Naive thymus-derived CD4-positive, alpha-beta T cell (primary cell): ENCODE measurements at regions of chr17 and their contacts with region 1.

Region 1: DNA sequence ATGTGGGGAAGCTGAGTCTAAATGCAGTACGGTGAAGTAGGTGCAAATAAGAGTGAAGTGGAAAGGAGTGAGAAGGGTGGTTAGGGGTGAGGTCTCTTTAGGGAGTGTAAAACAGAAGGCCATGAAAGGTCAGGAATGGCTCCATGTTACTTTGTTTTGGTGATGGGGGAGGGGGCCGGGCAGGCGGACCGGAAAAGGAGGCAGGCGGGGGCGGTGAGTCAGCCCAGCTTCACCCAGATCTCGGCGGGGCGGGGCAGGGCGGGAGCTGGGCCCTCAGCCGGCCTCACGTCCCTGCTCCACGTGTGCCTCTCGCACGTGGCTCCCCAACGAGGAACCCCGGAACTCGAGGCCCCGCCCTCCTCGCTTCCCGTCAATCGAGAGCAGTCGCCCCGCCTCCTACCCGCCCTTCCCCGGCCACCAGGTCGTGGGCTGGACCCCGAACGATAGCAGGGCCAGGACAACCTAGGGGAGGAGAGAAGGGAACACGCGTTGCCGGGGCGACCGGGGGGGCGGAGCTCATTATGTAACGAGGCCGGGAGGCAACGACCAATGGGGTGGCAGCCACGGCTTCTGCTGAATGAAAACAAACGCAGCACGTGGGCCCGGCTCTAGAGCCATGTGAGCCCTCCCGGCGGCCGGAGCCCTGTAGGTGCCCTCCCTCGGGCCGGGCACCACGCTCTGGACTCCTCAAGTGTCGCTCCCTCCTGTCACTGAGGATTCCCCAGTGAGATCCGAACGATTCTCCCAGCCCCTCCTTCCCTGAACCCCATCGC is 1.4 kb downstream of the NR1D1 start:
- DNase-seq: peak; percentile 94 to 99 (median 97)
- ATAC-seq: peak; percentile 78
- H3K4me3 ChIP-seq: peak overlapping the region; percentile 97
- H3K4me3 Mint-ChIP-seq: peak overlapping the region; percentile 82 to 99 (median 97)
- H3K27ac ChIP-seq: peak overlapping the region; percentile 94
- H3K27ac Mint-ChIP-seq: peak overlapping the region; percentile 75 to 100 (median 95)
- H3K4me1 ChIP-seq: peaks cover 62 to 69% of the 10 kb centered on the region in 2 donors
- H3K4me1 Mint-ChIP-seq: peaks cover 68 to 96% (median 84%) of the 10 kb centered on the region in 7 donors
- H3K27me3 ChIP-seq: no peaks in the 10 kb centered on the region
- H3K27me3 Mint-ChIP-seq: peaks cover 0 to 6% (median 0%) of the 10 kb centered on the region in 5 donors

Region 2: GRCh38 chr17:39927101-39927928 is 171.7 kb before region 1 on chr17 and contains the starts of genes LRRC3C and ORMDL3:
- CTCF ChIA-PET with region 1: no interaction called
- POLR2A ChIA-PET with region 1: no interaction called
- intact Hi-C with region 1: loop called in 1 of 2 experiments (anchors 1 kb)
- DNase-seq: peak; percentile 86 to 95 (median 92)
- ATAC-seq: peak; percentile 92
- H3K4me3 ChIP-seq: peak within 1 kb of the TSS; percentile 82
- H3K4me3 Mint-ChIP-seq: peak within 1 kb of the TSS; percentile 90 to 98 (median 92)
- H3K27ac ChIP-seq: peak within 1 kb of the TSS; percentile 87
- H3K27ac Mint-ChIP-seq: peak within 1 kb of the TSS; percentile 85 to 97 (median 93)
- H3K4me1 ChIP-seq: peaks cover 49 to 50% of the 10 kb centered on the region in 2 donors
- H3K4me1 Mint-ChIP-seq: peaks cover 20 to 59% (median 46%) of the 10 kb centered on the region in 7 donors
- H3K27me3 ChIP-seq: no peaks in the 10 kb centered on the region
- H3K27me3 Mint-ChIP-seq: no peaks in the 10 kb centered on the region
- total RNA-seq, gene LRRC3C: 0.27 TPM in 1 of 5 experiments, not detected in the others
- total RNA-seq, gene ORMDL3: 77.6 to 205 (median 110) TPM

Region 3: DNA sequence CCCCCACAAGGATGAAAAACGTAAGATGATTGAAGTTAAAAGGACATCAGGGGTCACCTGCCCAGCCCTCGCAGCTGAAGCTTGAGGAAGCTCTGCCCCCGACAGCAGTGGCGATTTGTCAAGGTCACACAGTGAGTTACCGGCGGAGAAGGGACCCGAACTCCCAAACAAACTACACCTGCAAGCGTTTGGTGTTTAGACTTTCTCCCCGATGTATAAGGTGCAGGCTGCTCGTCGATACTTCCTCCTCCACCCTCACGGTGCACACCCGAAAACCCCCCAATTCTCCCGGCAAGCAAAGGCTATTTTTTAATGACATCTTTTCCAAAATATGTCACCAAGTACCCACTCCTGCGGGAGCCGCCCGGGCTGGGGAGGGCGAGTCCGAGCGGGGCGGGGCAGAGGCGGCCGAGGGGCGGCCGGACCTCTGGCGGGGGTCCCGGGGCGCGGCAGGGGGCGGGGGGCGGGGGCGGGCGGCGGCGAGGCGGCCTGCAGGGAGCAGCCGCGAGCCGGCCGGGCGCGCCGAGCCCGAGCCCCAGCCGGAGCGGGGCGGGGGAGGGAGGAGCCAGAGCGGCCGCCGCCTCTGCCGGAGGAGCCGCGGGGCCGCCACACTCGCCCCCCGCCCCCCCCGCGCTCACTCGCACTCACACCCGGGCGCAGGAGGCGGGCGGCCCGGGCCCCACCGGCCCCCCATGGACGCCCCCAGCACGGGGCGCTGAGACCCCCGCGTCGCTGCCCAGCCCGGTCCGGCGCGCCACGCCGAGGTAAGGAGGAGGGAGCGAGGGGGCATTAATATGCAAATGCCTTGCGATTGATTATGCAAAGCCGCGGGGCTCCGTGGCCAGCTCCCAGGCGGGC is 36.5 kb before region 1 on chr17 and contains the start of gene THRA:
- CTCF ChIA-PET with region 1: interaction called, 4 read pairs
- POLR2A ChIA-PET with region 1: interaction called, 62 read pairs
- intact Hi-C with region 1: loop called in 1 of 2 experiments (anchors 1 kb)
- DNase-seq: peak; percentile 56 to 77 (median 71)
- ATAC-seq: peak; percentile 93
- H3K4me3 ChIP-seq: peak within 1 kb of the TSS; percentile 81
- H3K4me3 Mint-ChIP-seq: peak within 1 kb of the TSS; percentile 86 to 97 (median 94)
- H3K27ac ChIP-seq: peak within 1 kb of the TSS; percentile 84
- H3K27ac Mint-ChIP-seq: peak within 1 kb of the TSS; percentile 35 to 95 (median 89)
- H3K4me1 ChIP-seq: peaks cover 21 to 34% of the 10 kb centered on the region in 2 donors
- H3K4me1 Mint-ChIP-seq: peaks cover 32 to 50% (median 43%) of the 10 kb centered on the region in 7 donors
- H3K27me3 ChIP-seq: no peaks in the 10 kb centered on the region
- H3K27me3 Mint-ChIP-seq: peaks cover 0 to 62% (median 0%) of the 10 kb centered on the region in 5 donors
- total RNA-seq, gene THRA: 3.2 to 55.9 (median 48.4) TPM

Region 4: DNA sequence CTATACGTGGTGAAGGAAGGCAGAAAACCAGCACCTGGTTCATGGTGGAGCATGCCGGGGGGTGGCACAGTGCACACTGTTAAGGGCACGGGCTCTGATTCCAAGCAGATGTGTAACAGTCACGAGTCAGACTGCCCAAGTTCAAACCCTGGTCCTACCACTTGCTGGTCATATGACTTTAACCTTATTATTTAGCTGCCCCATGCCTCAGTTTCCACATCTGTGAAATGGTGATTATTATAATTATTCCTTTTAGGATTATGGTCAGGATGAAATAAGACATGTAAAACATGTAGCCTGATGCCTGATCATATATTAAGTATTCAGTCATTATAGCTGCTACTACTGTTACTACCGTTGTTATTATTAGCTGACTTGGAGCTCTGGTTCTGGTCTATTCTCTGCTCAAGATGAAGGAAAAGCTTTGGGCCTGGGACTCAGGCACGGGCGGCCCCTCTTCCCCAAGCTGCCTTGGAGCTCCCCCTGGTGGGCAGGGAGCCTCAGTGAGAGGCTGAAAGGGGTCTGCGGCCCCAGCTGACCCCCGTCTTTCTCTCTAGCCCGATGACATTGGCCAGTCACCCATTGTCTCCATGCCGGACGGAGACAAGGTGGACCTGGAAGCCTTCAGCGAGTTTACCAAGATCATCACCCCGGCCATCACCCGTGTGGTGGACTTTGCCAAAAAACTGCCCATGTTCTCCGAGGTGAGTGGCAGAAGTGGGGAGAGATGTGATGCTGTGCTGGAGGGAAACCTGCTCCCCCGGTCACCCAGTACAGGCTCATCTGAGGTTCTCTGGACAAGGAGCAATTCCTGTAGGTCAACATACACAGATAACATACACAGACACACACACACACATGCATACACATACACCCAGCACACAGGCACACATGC is 12.6 kb before region 1 on chr17:
- CTCF ChIA-PET with region 1: interaction called, 29 read pairs
- POLR2A ChIA-PET with region 1: interaction called, 7 read pairs
- intact Hi-C with region 1: no loop called
- DNase-seq: peak in 6 of 9 donors; percentile 56 to 69 (median 61)
- ATAC-seq: peak; percentile 76
- H3K4me3 ChIP-seq: no peak overlapping the region
- H3K4me3 Mint-ChIP-seq: peak overlapping the region in 1 of 10 donors; percentile 38
- H3K27ac ChIP-seq: no peak overlapping the region
- H3K27ac Mint-ChIP-seq: peak overlapping the region in 8 of 9 donors; percentile 9 to 70 (median 47)
- H3K4me1 ChIP-seq: peaks cover 0 to 4% of the 10 kb centered on the region in 2 donors
- H3K4me1 Mint-ChIP-seq: peaks cover 4 to 35% (median 21%) of the 10 kb centered on the region in 7 donors
- H3K27me3 ChIP-seq: no peaks in the 10 kb centered on the region
- H3K27me3 Mint-ChIP-seq: no peaks in the 10 kb centered on the region

Region 5: GRCh38 chr17:40139566-40140058 is 40.6 kb after region 1 on chr17:
- CTCF ChIA-PET with region 1: interaction called, 4 read pairs
- POLR2A ChIA-PET with region 1: interaction called, 30 read pairs
- intact Hi-C with region 1: loop called (anchors 1 kb)
- DNase-seq: peak in 4 of 9 donors; percentile 8 to 25 (median 10)
- ATAC-seq: peak; percentile 8
- H3K4me3 ChIP-seq: peak overlapping the region; percentile 80
- H3K4me3 Mint-ChIP-seq: peak overlapping the region; percentile 83 to 97 (median 93)
- H3K27ac ChIP-seq: peak overlapping the region; percentile 96
- H3K27ac Mint-ChIP-seq: peak overlapping the region; percentile 85 to 100 (median 98)
- H3K4me1 ChIP-seq: peaks cover 21 to 28% of the 10 kb centered on the region in 2 donors
- H3K4me1 Mint-ChIP-seq: peaks cover 14 to 62% (median 44%) of the 10 kb centered on the region in 7 donors
- H3K27me3 ChIP-seq: no peaks in the 10 kb centered on the region
- H3K27me3 Mint-ChIP-seq: peaks cover 0 to 2% (median 0%) of the 10 kb centered on the region in 5 donors

Region 6: DNA sequence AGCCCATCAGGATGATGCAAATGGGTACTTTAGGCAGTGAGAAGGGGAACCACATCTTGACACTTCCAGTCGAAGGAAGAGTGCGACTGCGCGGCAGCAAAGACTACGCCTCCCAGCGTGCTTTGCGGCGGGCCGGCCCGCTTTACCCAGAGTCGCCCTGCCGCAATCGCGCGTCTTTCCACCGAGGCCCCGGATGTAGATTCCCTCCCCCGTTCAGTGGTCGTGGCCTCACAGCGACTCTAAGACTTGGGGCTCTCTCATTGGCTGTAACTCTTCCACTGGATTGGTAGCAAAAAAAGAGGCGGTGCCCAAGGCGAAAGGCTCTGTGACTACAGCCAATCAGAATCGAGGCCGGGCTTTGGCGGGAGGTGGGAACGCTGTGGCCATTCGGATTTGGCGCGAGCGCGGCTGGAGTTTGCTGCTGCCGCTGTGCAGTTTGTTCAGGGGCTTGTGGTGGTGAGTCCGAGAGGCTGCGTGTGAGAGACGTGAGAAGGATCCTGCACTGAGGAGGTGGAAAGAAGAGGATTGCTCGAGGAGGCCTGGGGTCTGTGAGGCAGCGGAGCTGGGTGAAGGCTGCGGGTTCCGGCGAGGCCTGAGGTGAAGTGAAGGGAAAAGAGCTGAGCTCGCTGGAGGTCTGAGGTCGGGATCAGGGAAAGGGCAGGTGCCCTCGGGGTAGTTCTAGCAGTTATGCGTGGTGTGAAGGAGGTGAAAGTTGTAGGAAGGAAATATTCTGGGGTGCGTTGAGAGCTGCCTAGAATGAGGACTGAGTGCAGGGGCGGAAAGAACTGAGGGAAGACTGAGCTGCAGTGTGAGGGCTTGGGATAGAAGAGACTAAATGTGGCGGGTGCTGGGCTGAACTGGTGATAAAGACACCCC is 188.7 kb after region 1 on chr17 and contains the start of gene CDC6:
- CTCF ChIA-PET with region 1: no interaction called
- POLR2A ChIA-PET with region 1: no interaction called
- intact Hi-C with region 1: loop called in 1 of 2 experiments (anchors 5 kb)
- DNase-seq: peak; percentile 90 to 99 (median 98)
- ATAC-seq: peak; percentile 97
- H3K4me3 ChIP-seq: peak within 1 kb of the TSS; percentile 70
- H3K4me3 Mint-ChIP-seq: peak within 1 kb of the TSS; percentile 93 to 99 (median 96)
- H3K27ac ChIP-seq: peak within 1 kb of the TSS; percentile 63
- H3K27ac Mint-ChIP-seq: peak within 1 kb of the TSS; percentile 84 to 98 (median 91)
- H3K4me1 ChIP-seq: peaks cover 3 to 11% of the 10 kb centered on the region in 2 donors
- H3K4me1 Mint-ChIP-seq: peaks cover 8 to 41% (median 22%) of the 10 kb centered on the region in 7 donors
- H3K27me3 ChIP-seq: no peaks in the 10 kb centered on the region
- H3K27me3 Mint-ChIP-seq: no peaks in the 10 kb centered on the region
- total RNA-seq, gene CDC6: 0.51 to 73.6 (median 0.85) TPM